B cell (primary cell): ENCODE measurements at regions of chr14 and their contacts with region 1.

Region 1: GRCh38 chr14:103628684-103629502 is at the start of gene KLC1:
- DNase-seq: peak; percentile 90
- ATAC-seq: peak; percentile 74
- H3K4me3 ChIP-seq: peak within 1 kb of the TSS; percentile 66 to 86 (median 75)
- H3K4me3 Mint-ChIP-seq: peak within 1 kb of the TSS; percentile 88
- H3K27ac ChIP-seq: peak within 1 kb of the TSS; percentile 73 to 83
- H3K27ac Mint-ChIP-seq: peak within 1 kb of the TSS; percentile 95
- H3K4me1 ChIP-seq: peaks cover 41 to 46% of the 10 kb centered on the region in 2 donors
- H3K4me1 Mint-ChIP-seq: peaks cover 55% of the 10 kb centered on the region
- H3K27me3 ChIP-seq: no peaks in the 10 kb centered on the region
- H3K27me3 Mint-ChIP-seq: no peaks in the 10 kb centered on the region
- CTCF ChIP-seq: no peak
- total RNA-seq, gene KLC1: 243 and 249 TPM in 2 replicates

Region 2: DNA sequence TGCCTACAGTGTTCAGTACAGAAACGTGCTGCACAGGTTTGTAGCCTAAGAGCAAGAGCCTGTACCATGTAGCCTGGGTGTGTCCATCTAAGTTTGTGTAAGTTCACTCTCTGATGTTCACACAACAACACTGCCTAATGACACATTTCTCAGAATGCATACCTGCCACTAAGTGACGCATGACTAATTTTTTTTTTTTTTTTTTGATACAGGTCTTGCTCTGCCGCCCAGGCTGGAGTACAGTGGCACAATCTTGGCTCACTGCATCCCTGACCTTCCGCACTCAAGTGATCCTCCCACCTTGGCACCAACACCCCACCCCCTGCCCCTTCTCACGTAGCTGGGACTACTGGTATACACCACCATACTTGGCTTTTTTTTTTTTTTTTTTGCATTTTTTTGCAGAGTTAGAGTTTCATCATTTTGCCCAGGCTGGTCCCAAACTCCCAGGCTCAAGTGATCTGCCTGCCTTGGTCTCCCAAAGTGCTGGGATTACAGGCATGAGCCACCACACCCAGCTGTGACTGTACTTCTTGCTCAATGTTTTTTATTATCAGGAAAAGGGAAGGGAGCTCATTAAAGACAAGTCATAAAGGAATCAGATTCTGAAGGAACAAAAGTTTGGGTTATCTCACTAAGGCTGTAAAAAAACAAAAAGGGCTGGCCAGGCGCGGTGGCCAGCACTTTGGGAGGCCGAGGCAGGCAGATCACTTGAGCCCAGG is 561.5 kb before region 1 on chr14:
- CTCF ChIA-PET with region 1: no interaction called
- POLR2A ChIA-PET with region 1: no interaction called
- intact Hi-C with region 1: no loop called
- DNase-seq: no peak
- ATAC-seq: no peak
- H3K4me3 ChIP-seq: no peak overlapping the region
- H3K4me3 Mint-ChIP-seq: no peak overlapping the region
- H3K27ac ChIP-seq: no peak overlapping the region
- H3K27ac Mint-ChIP-seq: no peak overlapping the region
- H3K4me1 ChIP-seq: no peaks in the 10 kb centered on the region
- H3K4me1 Mint-ChIP-seq: no peaks in the 10 kb centered on the region
- H3K27me3 ChIP-seq: peaks cover 0 to 4% (median 0%) of the 10 kb centered on the region in 4 experiments
- H3K27me3 Mint-ChIP-seq: peaks cover 3% of the 10 kb centered on the region
- CTCF ChIP-seq: no peak

Region 3: GRCh38 chr14:103385152-103385993 is 243.5 kb before region 1 on chr14 and contains the start of gene MARK3:
- CTCF ChIA-PET with region 1: no interaction called
- POLR2A ChIA-PET with region 1: interaction called, 3 read pairs
- intact Hi-C with region 1: loop called (anchors 5 kb)
- DNase-seq: peak; percentile 98
- ATAC-seq: peak; percentile 86
- H3K4me3 ChIP-seq: peak within 1 kb of the TSS; percentile 68 to 96 (median 90)
- H3K4me3 Mint-ChIP-seq: peak within 1 kb of the TSS; percentile 99
- H3K27ac ChIP-seq: peak within 1 kb of the TSS; percentile 90 to 91
- H3K27ac Mint-ChIP-seq: peak within 1 kb of the TSS; percentile 98
- H3K4me1 ChIP-seq: peaks cover 24 to 33% of the 10 kb centered on the region in 2 donors
- H3K4me1 Mint-ChIP-seq: peaks cover 41% of the 10 kb centered on the region
- H3K27me3 ChIP-seq: no peaks in the 10 kb centered on the region
- H3K27me3 Mint-ChIP-seq: peaks cover 13% of the 10 kb centered on the region
- CTCF ChIP-seq: peak; percentile 40
- total RNA-seq, gene MARK3: 139 and 142 TPM in 2 replicates

Region 4: GRCh38 chr14:103651585-103651984 is 22.7 kb after region 1 on chr14:
- CTCF ChIA-PET with region 1: no interaction called
- POLR2A ChIA-PET with region 1: no interaction called
- intact Hi-C with region 1: no loop called
- DNase-seq: no peak
- ATAC-seq: no peak
- H3K4me3 ChIP-seq: no peak overlapping the region
- H3K4me3 Mint-ChIP-seq: no peak overlapping the region
- H3K27ac ChIP-seq: no peak overlapping the region
- H3K27ac Mint-ChIP-seq: no peak overlapping the region
- H3K4me1 ChIP-seq: peaks cover 0 to 8% of the 10 kb centered on the region in 2 donors
- H3K4me1 Mint-ChIP-seq: peaks cover 25% of the 10 kb centered on the region
- H3K27me3 ChIP-seq: no peaks in the 10 kb centered on the region
- H3K27me3 Mint-ChIP-seq: no peaks in the 10 kb centered on the region
- CTCF ChIP-seq: no peak

Region 5: GRCh38 chr14:103679351-103679750 is 50.5 kb after region 1 on chr14:
- CTCF ChIA-PET with region 1: no interaction called
- POLR2A ChIA-PET with region 1: interaction called, 3 read pairs
- intact Hi-C with region 1: loop called (anchors 1 kb)
- DNase-seq: peak; percentile 78
- ATAC-seq: peak; percentile 97
- H3K4me3 ChIP-seq: no peak overlapping the region
- H3K4me3 Mint-ChIP-seq: no peak overlapping the region
- H3K27ac ChIP-seq: peak overlapping the region in 1 of 2 donors; percentile 59
- H3K27ac Mint-ChIP-seq: peak overlapping the region; percentile 67
- H3K4me1 ChIP-seq: peaks cover 8 to 11% of the 10 kb centered on the region in 2 donors
- H3K4me1 Mint-ChIP-seq: peaks cover 14% of the 10 kb centered on the region
- H3K27me3 ChIP-seq: no peaks in the 10 kb centered on the region
- H3K27me3 Mint-ChIP-seq: no peaks in the 10 kb centered on the region
- CTCF ChIP-seq: peak; percentile 77

Region 6: GRCh38 chr14:103696466-103697071 is 67.7 kb after region 1 on chr14:
- CTCF ChIA-PET with region 1: no interaction called
- POLR2A ChIA-PET with region 1: interaction called, 3 read pairs
- intact Hi-C with region 1: loop called (anchors 5 kb)
- DNase-seq: peak; percentile 10
- ATAC-seq: no peak
- H3K4me3 ChIP-seq: no peak overlapping the region
- H3K4me3 Mint-ChIP-seq: no peak overlapping the region
- H3K27ac ChIP-seq: peak overlapping the region; percentile 10 to 45
- H3K27ac Mint-ChIP-seq: peak overlapping the region; percentile 77
- H3K4me1 ChIP-seq: peaks cover 52 to 61% of the 10 kb centered on the region in 2 donors
- H3K4me1 Mint-ChIP-seq: peaks cover 62% of the 10 kb centered on the region
- H3K27me3 ChIP-seq: no peaks in the 10 kb centered on the region
- H3K27me3 Mint-ChIP-seq: no peaks in the 10 kb centered on the region
- CTCF ChIP-seq: no peak

Region 7: GRCh38 chr14:103715052-103716000 is 86.4 kb after region 1 on chr14 and contains the starts of genes XRCC3 and ZFYVE21:
- CTCF ChIA-PET with region 1: no interaction called
- POLR2A ChIA-PET with region 1: no interaction called
- intact Hi-C with region 1: loop called (anchors 1 kb)
- DNase-seq: peak; percentile 100
- ATAC-seq: peak; percentile 95
- H3K4me3 ChIP-seq: peak within 1 kb of the TSS; percentile 12 to 82 (median 60)
- H3K4me3 Mint-ChIP-seq: peak within 1 kb of the TSS; percentile 91
- H3K27ac ChIP-seq: peak within 1 kb of the TSS in 1 of 2 donors; percentile 55
- H3K27ac Mint-ChIP-seq: peak within 1 kb of the TSS; percentile 85
- H3K4me1 ChIP-seq: peaks cover 15 to 24% of the 10 kb centered on the region in 2 donors
- H3K4me1 Mint-ChIP-seq: peaks cover 36% of the 10 kb centered on the region
- H3K27me3 ChIP-seq: no peaks in the 10 kb centered on the region
- H3K27me3 Mint-ChIP-seq: no peaks in the 10 kb centered on the region
- CTCF ChIP-seq: no peak
- total RNA-seq, gene XRCC3: 18.0 and 18.6 TPM in 2 replicates
- total RNA-seq, gene ZFYVE21: 18.6 and 24.3 TPM in 2 replicates